Thyroid gland (tissue), 4 donors: ENCODE measurements at regions of chr1 and their contacts with region 1.

Region 1: DNA sequence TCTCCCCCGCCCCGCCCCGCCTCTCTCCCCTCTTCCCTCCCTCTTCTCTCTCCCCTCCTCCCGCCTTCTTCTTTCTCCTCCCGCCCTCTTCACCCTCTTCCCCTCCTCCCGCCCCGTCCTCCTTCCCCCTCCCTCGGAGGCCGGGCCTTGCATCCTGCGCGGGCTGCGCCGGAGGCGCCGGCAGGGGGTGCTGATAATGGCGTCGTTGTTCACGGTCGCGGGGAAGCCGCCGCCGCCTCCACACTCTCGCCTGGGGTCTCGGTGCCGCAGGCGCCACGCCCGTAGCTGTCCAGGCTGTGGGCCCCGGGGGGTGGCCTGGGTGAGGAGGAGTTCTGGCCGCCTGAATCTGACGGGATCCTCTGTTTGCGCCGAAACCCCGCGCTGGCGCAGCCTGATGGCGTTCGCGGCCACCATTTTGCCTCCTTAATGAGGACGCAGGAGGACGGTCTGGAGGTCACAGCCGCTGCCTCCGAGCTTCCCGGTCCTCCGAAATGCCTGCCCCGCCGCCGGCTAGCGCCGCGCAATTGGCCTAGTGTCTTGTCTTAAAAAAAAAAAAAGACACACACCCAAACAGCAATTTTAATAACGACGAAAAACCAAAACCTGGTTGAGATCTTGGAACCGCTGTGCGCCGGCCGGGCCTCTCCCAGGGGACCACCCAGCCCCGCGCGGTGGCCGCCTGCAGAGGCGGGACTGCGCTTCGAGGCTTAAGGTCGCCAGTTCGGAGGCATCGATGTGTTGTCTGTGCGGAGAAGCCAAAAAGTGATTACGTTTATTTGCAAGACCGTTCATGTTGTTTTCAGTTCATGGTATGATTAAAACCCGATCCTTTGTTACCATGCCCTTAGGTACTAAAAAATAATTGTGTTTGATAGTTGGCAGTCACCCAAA is 106.6 kb upstream of the HNRNPU start:
- DNase-seq: peak; percentile 94 to 96
- H3K4me3 ChIP-seq: peak overlapping the region; percentile 47 to 63 (median 60)
- H3K27ac ChIP-seq: peak overlapping the region; percentile 99 to 100 (median 100)
- H3K4me1 ChIP-seq: peaks cover 4 to 10% of the 10 kb centered on the region in 2 donors
- H3K27me3 ChIP-seq: no peaks in the 10 kb centered on the region
- CTCF ChIP-seq: peak; percentile 18 to 73 (median 60)
- POLR2A ChIP-seq: peak; percentile 35 to 83

Region 2: DNA sequence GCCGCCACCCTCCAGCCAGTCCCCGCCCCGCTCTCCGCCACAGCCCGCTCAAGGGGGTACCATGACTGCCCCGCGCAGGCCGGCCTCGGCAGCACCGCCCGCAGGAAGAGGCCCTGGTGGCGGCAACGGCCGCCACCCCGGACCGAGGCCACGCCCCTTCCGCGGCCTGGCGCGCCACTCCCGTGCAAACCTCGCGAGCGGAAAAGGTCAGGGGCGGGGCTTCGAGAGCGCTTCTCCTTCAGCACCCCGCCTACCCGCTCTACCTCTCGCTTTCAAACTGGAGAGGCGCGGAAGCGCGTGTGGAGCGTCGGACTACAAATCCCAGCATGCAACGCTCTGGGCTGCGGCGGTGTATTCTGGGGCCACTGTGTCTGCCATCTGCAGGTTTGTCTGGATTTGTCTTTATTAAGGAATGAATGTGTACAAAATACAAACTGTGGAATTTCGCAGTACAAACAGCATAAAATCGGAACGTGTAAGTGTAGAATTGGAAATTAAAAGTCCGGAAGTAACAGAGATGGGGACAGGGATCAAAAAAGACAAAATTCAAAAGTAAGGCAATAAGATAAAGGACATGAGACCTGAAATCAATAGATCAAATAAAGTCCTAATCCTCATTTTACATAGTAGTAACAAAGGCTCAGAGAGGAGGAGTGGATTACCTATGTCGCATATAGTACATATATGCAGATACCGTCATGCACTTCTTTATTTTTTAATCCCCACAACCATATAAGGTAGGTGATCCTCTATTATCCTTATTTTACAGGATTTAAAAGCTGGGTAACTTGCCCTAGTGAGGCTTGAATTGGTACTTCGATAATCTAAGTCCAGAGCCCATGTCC is 518.7 kb before region 1 on chr1:
- intact Hi-C with region 1: loop called (anchors 10 kb)
- DNase-seq: peak; percentile 100
- H3K4me3 ChIP-seq: peak overlapping the region in 2 of 3 donors; percentile 84 to 99
- H3K27ac ChIP-seq: peak overlapping the region; percentile 95 to 98 (median 96)
- H3K4me1 ChIP-seq: peaks cover 21 to 31% of the 10 kb centered on the region in 2 donors
- H3K27me3 ChIP-seq: no peaks in the 10 kb centered on the region
- CTCF ChIP-seq: peak in 3 of 6 experiments; percentile 52 to 68 (median 57)
- POLR2A ChIP-seq: peak in 1 of 2 donors; percentile 33

Region 3: DNA sequence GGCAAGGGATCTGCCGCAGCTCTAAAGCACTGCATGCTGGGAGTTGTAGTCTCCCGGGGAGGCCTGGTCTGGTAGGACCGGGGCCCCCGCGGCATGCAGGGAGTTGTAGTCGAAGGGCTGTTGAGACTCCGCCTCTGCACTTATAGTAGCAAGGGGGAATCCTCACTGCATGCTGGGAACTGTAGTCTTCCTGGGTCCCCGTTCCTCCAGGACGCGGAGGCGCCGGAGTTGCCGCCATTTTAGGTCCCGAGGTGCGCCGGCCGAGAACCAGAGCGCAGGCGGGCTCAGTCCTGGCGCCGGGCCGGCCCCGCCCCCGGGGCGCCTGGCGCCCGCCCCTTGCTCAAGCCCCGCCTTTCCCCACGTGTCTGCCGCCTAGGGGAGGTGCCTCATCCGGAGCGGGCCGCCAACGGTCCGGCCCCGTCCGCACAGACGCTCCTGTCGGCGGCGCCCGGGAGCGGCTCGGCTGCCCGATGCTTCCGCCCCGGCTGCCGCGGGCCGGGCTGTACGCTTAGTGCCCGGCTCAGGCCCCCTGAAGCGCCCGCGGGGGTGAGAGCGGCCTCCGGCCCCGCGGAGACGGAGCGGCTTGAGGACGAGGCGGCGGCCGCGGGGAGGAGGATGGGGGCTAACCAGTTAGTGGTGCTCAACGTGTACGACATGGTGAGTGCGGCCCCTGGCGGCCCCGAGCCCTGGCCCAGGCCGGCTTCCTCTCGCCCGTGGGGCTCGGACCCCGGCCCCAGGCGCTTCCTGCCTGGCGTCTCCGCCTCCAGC is 318.0 kb before region 1 on chr1 and contains the start of gene DESI2:
- intact Hi-C with region 1: loop called (anchors 5 kb)
- DNase-seq: peak; percentile 99
- H3K4me3 ChIP-seq: peak within 1 kb of the TSS; percentile 71 to 89 (median 80)
- H3K27ac ChIP-seq: peak within 1 kb of the TSS; percentile 91 to 95 (median 94)
- H3K4me1 ChIP-seq: peaks cover 10 to 17% of the 10 kb centered on the region in 2 donors
- H3K27me3 ChIP-seq: no peaks in the 10 kb centered on the region
- CTCF ChIP-seq: peak in 4 of 6 experiments; percentile 12 to 58 (median 42)
- POLR2A ChIP-seq: peak; percentile 92 to 100
- total RNA-seq, gene DESI2: 49.5 to 71.2 (median 57.5) TPM

Region 4: DNA sequence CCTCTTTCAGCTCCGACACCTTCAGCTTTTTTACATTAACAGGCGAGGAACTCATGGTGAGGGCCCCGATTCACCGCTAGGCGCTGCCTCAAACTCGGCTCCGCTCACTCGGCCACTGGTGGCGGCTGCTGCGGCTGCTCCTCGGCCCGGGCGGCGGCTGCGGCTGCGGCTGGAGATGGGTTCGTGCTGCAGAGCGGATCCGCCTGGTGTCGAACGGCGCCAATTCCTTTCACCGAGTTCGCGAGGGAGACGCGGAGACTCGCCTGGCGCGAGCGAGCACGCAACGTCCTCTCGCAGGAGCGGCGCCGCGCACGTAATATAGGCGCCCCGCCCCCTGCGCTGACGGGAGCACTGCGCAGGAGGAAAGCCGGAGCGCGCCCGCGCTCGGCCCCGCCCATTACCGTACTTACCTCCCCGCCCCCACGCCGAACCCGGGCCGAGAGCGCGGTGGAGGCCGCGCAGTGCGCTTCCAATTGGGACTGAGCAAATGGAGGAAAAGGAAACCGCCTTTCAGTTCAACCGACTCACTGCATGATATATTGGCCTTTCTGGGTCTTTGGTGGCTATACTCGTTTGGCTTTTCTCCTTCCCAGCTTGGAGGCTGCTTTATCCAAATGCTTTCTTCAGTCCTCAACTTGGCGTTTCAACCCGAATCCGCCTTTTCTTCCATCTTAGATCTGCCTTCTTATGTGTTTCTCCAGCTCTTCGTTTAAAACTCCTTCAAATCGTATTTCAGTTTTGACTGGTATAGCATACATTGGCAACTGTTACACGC is 106.5 kb before region 1 on chr1 and contains the start of gene HNRNPU:
- intact Hi-C with region 1: loop called (anchors 5 kb)
- DNase-seq: peak; percentile 97
- H3K4me3 ChIP-seq: peak within 1 kb of the TSS; percentile 62 to 99 (median 96)
- H3K27ac ChIP-seq: peak within 1 kb of the TSS; percentile 98 to 100 (median 100)
- H3K4me1 ChIP-seq: peaks cover 22 to 31% of the 10 kb centered on the region in 2 donors
- H3K27me3 ChIP-seq: no peaks in the 10 kb centered on the region
- CTCF ChIP-seq: peak in 3 of 6 experiments; percentile 25 to 46 (median 30)
- POLR2A ChIP-seq: peak; percentile 86 to 100
- total RNA-seq, gene HNRNPU: 305 to 433 (median 344) TPM